ENCODE measurements at regions of chr1 and their contacts with region 1.

Region 1: GRCh38 chr1:198756470-198756869 is 117.6 kb downstream of the PTPRC start:
- DNase-seq: no peak
- H3K4me3 ChIP-seq: no peak overlapping the region
- H3K4me3 Mint-ChIP-seq: no peak overlapping the region
- H3K27ac ChIP-seq: peak overlapping the region in 1 of 2 donors; percentile 30
- H3K27ac Mint-ChIP-seq: peak overlapping the region in 1 of 7 donors; percentile 63
- H3K4me1 ChIP-seq: peaks cover 10 to 18% of the 10 kb centered on the region in 2 donors
- H3K4me1 Mint-ChIP-seq: peaks cover 19% of the 10 kb centered on the region
- H3K27me3 ChIP-seq: no peaks in the 10 kb centered on the region
- H3K27me3 Mint-ChIP-seq: no peaks in the 10 kb centered on the region
- CTCF ChIP-seq: peak; percentile 45

Region 2: GRCh38 chr1:198699167-198700015 is 57.1 kb before region 1 on chr1:
- intact Hi-C with region 1: loop called in 1 of 2 experiments (anchors 10 kb)
- DNase-seq: no peak
- H3K4me3 ChIP-seq: no peak overlapping the region
- H3K4me3 Mint-ChIP-seq: no peak overlapping the region
- H3K27ac ChIP-seq: peak overlapping the region in 1 of 2 donors; percentile 32
- H3K27ac Mint-ChIP-seq: peak overlapping the region in 3 of 7 donors; percentile 5 to 46 (median 19)
- H3K4me1 ChIP-seq: peaks cover 11 to 20% of the 10 kb centered on the region in 2 donors
- H3K4me1 Mint-ChIP-seq: peaks cover 28% of the 10 kb centered on the region
- H3K27me3 ChIP-seq: no peaks in the 10 kb centered on the region
- H3K27me3 Mint-ChIP-seq: peaks cover 0 to 3% (median 0%) of the 10 kb centered on the region in 3 donors
- CTCF ChIP-seq: peak; percentile 36

Region 3: GRCh38 chr1:198716051-198716450 is 40.4 kb before region 1 on chr1:
- intact Hi-C with region 1: no loop called
- DNase-seq: no peak
- H3K4me3 ChIP-seq: no peak overlapping the region
- H3K4me3 Mint-ChIP-seq: no peak overlapping the region
- H3K27ac ChIP-seq: peak overlapping the region in 1 of 2 donors; percentile 4
- H3K27ac Mint-ChIP-seq: peak overlapping the region in 6 of 7 donors; percentile 14 to 78 (median 36)
- H3K4me1 ChIP-seq: peaks cover 7 to 8% of the 10 kb centered on the region in 2 donors
- H3K4me1 Mint-ChIP-seq: peaks cover 13% of the 10 kb centered on the region
- H3K27me3 ChIP-seq: no peaks in the 10 kb centered on the region
- H3K27me3 Mint-ChIP-seq: no peaks in the 10 kb centered on the region
- CTCF ChIP-seq: no peak

Region 4: GRCh38 chr1:199113265-199113869 is 356.9 kb after region 1 on chr1:
- intact Hi-C with region 1: loop called in 1 of 2 experiments (anchors 10 kb)
- DNase-seq: peak; percentile 33 to 63 (median 58)
- H3K4me3 ChIP-seq: no peak overlapping the region
- H3K4me3 Mint-ChIP-seq: no peak overlapping the region
- H3K27ac ChIP-seq: no peak overlapping the region
- H3K27ac Mint-ChIP-seq: no peak overlapping the region
- H3K4me1 ChIP-seq: no peaks in the 10 kb centered on the region
- H3K4me1 Mint-ChIP-seq: peaks cover 8% of the 10 kb centered on the region
- H3K27me3 ChIP-seq: no peaks in the 10 kb centered on the region
- H3K27me3 Mint-ChIP-seq: peaks cover 0 to 2% (median 0%) of the 10 kb centered on the region in 3 donors
- CTCF ChIP-seq: peak; percentile 75